PC-3 (cell line): ENCODE measurements at regions of chr5 and their contacts with region 1.

Region 1: GRCh38 chr5:119470851-119471451 is 18.7 kb downstream of the HSD17B4 start:
- DNase-seq: peak; percentile 57
- ATAC-seq: peak; percentile 42; the same call in 1 of the 2 replicates
- H3K4me3 ChIP-seq: no peak overlapping the region
- H3K27ac ChIP-seq: no peak overlapping the region
- H3K4me1 ChIP-seq: no peaks in the 10 kb centered on the region
- H3K27me3 ChIP-seq: no peaks in the 10 kb centered on the region
- CTCF ChIP-seq: peak; percentile 86

Region 2: DNA sequence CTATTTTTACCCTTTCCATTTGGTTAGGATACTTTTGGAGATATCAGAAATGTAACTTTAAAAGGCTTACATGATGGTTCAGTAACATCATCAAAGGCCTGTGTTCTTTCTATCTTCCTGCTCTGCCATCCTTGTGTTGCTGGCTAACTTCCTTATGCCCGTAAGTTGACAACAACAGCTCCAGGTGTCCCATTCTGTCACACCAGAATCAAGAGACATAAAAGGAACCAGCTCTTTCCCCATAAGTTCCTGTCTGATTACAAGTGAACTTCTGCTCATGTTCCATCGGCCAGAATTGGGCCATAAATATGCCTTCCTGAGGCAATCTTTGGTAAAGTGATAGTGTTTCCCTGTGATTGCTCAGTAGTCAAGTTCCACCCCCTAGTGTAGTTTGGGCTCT is 250.8 kb after region 1 on chr5:
- CTCF ChIA-PET with region 1: no interaction called
- POLR2A ChIA-PET with region 1: no interaction called
- intact Hi-C with region 1: no loop called
- DNase-seq: no peak
- ATAC-seq: no peak
- H3K4me3 ChIP-seq: no peak overlapping the region
- H3K27ac ChIP-seq: no peak overlapping the region
- H3K4me1 ChIP-seq: no peaks in the 10 kb centered on the region
- H3K27me3 ChIP-seq: no peaks in the 10 kb centered on the region
- CTCF ChIP-seq: no peak

Region 3: DNA sequence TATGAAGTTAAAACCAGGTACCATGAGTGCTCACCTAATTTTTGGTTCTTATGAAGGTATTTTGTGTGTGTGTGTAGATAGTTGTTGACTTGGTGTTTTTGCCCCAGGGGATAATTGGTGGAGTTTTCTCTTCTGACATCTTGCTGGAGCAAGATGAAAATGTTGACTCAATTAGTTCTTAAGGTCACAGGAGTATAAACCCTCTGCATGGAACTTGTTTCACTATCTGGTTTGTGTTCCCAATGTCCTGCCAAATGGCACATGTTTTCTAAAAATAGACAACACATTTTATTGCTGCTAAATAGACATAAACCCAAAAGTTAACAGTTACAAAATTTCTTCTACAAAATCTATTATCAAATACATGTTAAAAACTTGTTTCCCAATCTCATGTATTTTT is 339.3 kb after region 1 on chr5:
- CTCF ChIA-PET with region 1: no interaction called
- POLR2A ChIA-PET with region 1: no interaction called
- intact Hi-C with region 1: no loop called
- DNase-seq: no peak
- ATAC-seq: no peak
- H3K4me3 ChIP-seq: no peak overlapping the region
- H3K27ac ChIP-seq: no peak overlapping the region
- H3K4me1 ChIP-seq: no peaks in the 10 kb centered on the region
- H3K27me3 ChIP-seq: no peaks in the 10 kb centered on the region
- CTCF ChIP-seq: no peak

Region 4: GRCh38 chr5:119878723-119879122 is 407.8 kb after region 1 on chr5:
- CTCF ChIA-PET with region 1: interaction called, 6 read pairs
- POLR2A ChIA-PET with region 1: no interaction called
- intact Hi-C with region 1: loop called (anchors 5 kb)
- DNase-seq: peak; percentile 31
- ATAC-seq: peak; percentile 48
- H3K4me3 ChIP-seq: no peak overlapping the region
- H3K27ac ChIP-seq: peak overlapping the region; percentile 62
- H3K4me1 ChIP-seq: peaks cover 25% of the 10 kb centered on the region
- H3K27me3 ChIP-seq: no peaks in the 10 kb centered on the region
- CTCF ChIP-seq: no peak

Region 5: GRCh38 chr5:120055858-120056257 is 584.9 kb after region 1 on chr5:
- CTCF ChIA-PET with region 1: no interaction called
- POLR2A ChIA-PET with region 1: no interaction called
- intact Hi-C with region 1: loop called (anchors 10 kb)
- DNase-seq: peak; percentile 32
- ATAC-seq: peak; percentile 87
- H3K4me3 ChIP-seq: no peak overlapping the region
- H3K27ac ChIP-seq: no peak overlapping the region
- H3K4me1 ChIP-seq: no peaks in the 10 kb centered on the region
- H3K27me3 ChIP-seq: no peaks in the 10 kb centered on the region
- CTCF ChIP-seq: peak; percentile 51; the same call in 1 of the 2 replicates

Region 6: DNA sequence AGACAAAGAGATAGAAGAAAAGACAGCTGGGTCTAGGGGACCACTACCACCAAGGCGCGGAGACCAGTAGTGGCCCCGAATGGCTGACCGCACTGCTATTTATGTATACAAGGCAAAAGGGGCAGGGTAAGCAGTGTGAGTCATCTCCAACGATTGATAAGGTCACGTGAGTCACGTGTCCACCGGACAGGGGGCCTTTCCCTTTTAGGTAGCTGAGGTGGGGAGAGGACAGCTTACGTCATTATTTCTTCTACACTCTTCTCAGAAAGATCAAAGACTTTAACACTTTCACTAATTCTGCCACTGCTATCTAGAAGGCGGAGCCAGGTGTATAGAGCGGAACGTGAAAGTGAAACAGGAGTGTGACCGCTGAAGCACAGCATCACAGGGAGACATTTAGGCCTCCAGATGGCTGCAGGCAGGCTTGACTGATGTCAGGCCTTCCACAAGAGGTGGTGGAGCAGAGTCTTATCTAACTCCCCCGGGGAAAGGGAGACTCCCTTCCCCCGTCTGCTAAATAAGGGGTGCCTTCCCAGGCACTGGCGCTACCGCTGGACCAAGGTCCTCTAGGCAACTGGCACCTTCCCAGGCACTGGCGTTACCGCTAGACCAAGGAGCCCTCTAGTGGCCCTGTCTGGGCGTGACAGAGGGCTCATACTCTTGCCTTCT is 987.0 kb after region 1 on chr5:
- CTCF ChIA-PET with region 1: no interaction called
- POLR2A ChIA-PET with region 1: no interaction called
- intact Hi-C with region 1: loop called (anchors 1 kb)
- DNase-seq: peak; percentile 78
- ATAC-seq: peak; percentile 94
- H3K4me3 ChIP-seq: peak overlapping the region; percentile 79
- H3K27ac ChIP-seq: no peak overlapping the region
- H3K4me1 ChIP-seq: no peaks in the 10 kb centered on the region
- H3K27me3 ChIP-seq: no peaks in the 10 kb centered on the region
- CTCF ChIP-seq: peak; percentile 61

Region 7: DNA sequence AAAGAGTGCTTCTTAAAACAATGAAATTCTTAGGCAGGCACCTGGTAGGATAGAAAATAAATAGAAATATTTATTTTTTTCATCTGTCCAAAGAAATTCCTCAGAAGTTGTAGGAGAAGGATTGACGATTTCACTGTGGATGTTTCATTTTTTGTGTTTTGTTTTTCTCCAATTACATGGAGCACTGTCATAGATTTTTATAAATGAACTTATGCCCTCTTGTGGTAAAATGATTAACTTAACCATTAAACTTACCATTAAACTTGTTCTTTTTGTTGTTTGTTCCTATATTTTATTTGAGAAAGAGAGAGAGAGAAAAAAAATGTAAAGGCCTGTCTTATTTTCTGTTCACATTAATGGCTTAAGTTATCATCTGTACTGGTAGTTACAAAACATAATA is 1332.3 kb after region 1 on chr5:
- CTCF ChIA-PET with region 1: no interaction called
- POLR2A ChIA-PET with region 1: no interaction called
- intact Hi-C with region 1: loop called (anchors 2 kb)
- DNase-seq: peak; percentile 51
- ATAC-seq: peak; percentile 58; the same call in 1 of the 2 replicates
- H3K4me3 ChIP-seq: no peak overlapping the region
- H3K27ac ChIP-seq: no peak overlapping the region
- H3K4me1 ChIP-seq: no peaks in the 10 kb centered on the region
- H3K27me3 ChIP-seq: no peaks in the 10 kb centered on the region
- CTCF ChIP-seq: peak; percentile 54